Esophagus squamous epithelium (tissue), 5 donors: ENCODE measurements at regions of chr17 and their contacts with region 1.

Region 1: DNA sequence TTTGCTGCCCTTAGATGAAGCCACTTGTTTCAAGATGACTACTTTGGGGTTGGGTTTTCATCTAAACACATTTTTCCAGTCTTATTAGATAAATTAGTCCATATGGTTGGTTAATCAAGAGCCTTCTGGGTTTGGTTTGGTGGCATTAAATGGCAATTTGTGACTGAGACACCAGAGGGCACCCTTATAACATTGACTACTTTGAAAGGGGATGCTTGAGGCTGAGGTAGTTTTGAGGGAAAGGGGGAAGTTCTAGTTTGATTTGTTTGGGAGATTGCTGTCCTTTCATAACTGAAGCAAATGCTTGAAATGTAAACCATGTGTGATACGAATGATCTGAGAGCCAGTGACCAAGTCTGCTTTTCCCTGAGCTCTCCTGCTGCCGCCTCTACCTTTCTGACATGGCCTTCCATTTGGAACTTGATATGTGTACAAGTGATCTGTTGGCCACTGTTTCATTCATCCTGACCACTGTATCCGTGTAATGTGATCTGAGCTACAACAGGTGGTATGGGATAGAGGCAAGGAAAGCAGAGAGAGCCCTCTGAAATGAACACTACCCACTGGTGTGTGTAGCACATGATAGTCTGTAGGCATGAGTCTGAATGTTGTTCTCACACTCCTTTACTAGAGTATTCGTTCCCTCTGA is 5.8 kb upstream of the RARA start:
- DNase-seq: no peak
- H3K4me3 ChIP-seq: no peak overlapping the region
- H3K27ac ChIP-seq: peak overlapping the region in 1 of 4 donors; percentile 0
- H3K4me1 ChIP-seq: peaks cover 26 to 45% (median 34%) of the 10 kb centered on the region in 3 donors
- H3K27me3 ChIP-seq: no peaks in the 10 kb centered on the region
- CTCF ChIP-seq: peak; percentile 59 to 88 (median 79)
- POLR2A ChIP-seq: no peak

Region 2: GRCh38 chr17:40355123-40355803 is 52.1 kb after region 1 on chr17:
- intact Hi-C with region 1: loop called (anchors 2 kb)
- DNase-seq: no peak
- H3K4me3 ChIP-seq: no peak overlapping the region
- H3K27ac ChIP-seq: peak overlapping the region in 3 of 4 donors; percentile 9 to 34 (median 31)
- H3K4me1 ChIP-seq: peaks cover 7 to 66% (median 17%) of the 10 kb centered on the region in 3 donors
- H3K27me3 ChIP-seq: no peaks in the 10 kb centered on the region
- CTCF ChIP-seq: peak; percentile 94 to 98 (median 96)
- POLR2A ChIP-seq: no peak

Region 3: GRCh38 chr17:40559954-40560591 is 256.9 kb after region 1 on chr17:
- intact Hi-C with region 1: loop called (anchors 10 kb)
- DNase-seq: no peak
- H3K4me3 ChIP-seq: peak overlapping the region in 3 of 4 donors; percentile 15 to 48 (median 27)
- H3K27ac ChIP-seq: peak overlapping the region; percentile 65 to 84 (median 84)
- H3K4me1 ChIP-seq: peaks cover 25 to 95% (median 38%) of the 10 kb centered on the region in 3 donors
- H3K27me3 ChIP-seq: no peaks in the 10 kb centered on the region
- CTCF ChIP-seq: peak; percentile 96 to 100 (median 98)
- POLR2A ChIP-seq: no peak